Thyroid gland (tissue), 4 donors: ENCODE measurements at regions of chr19 and their contacts with region 1.

Region 1: DNA sequence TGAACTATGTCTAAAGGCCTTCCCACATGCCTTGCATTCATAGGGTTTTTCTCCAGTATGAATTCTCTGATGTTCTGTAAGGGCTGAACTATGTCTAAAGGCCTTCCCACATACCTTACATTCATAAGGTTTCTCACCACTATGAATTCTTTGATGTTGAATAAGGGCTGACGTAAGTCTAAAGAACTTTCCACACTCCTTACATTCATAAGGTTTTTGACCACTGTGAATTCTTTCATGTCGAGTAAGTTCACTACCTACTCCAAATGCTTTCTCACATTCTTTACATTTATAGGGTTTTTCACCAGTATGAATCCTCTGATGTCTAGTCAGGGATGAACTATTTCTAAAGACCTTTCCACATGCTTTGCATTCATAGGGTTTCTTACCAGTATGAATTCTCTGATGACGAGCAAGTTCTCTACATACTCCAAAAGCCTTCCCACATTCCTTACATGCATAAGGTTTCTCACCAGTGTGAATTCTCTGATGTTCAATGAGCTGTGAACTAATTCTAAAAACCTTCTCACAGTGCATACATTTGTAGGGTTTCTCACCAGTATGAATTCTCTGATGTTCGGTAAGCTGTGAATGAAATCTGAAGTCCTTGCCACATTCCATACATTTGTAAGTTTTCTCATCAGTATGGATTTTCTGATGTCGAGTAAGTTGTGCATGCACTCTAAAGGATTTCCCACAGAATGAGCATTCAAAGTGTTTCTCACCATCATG is 19.1 kb upstream of the ZNF260 start:
- DNase-seq: no peak
- H3K4me3 ChIP-seq: no peak overlapping the region
- H3K27ac ChIP-seq: no peak overlapping the region
- H3K4me1 ChIP-seq: no peaks in the 10 kb centered on the region
- H3K27me3 ChIP-seq: no peaks in the 10 kb centered on the region
- CTCF ChIP-seq: no peak
- POLR2A ChIP-seq: no peak

Region 2: GRCh38 chr19:36627057-36627456 is 79.9 kb after region 1 on chr19:
- intact Hi-C with region 1: loop called (anchors 5 kb)
- DNase-seq: no peak
- H3K4me3 ChIP-seq: no peak overlapping the region
- H3K27ac ChIP-seq: no peak overlapping the region
- H3K4me1 ChIP-seq: no peaks in the 10 kb centered on the region
- H3K27me3 ChIP-seq: no peaks in the 10 kb centered on the region
- CTCF ChIP-seq: no peak
- POLR2A ChIP-seq: no peak

Region 3: DNA sequence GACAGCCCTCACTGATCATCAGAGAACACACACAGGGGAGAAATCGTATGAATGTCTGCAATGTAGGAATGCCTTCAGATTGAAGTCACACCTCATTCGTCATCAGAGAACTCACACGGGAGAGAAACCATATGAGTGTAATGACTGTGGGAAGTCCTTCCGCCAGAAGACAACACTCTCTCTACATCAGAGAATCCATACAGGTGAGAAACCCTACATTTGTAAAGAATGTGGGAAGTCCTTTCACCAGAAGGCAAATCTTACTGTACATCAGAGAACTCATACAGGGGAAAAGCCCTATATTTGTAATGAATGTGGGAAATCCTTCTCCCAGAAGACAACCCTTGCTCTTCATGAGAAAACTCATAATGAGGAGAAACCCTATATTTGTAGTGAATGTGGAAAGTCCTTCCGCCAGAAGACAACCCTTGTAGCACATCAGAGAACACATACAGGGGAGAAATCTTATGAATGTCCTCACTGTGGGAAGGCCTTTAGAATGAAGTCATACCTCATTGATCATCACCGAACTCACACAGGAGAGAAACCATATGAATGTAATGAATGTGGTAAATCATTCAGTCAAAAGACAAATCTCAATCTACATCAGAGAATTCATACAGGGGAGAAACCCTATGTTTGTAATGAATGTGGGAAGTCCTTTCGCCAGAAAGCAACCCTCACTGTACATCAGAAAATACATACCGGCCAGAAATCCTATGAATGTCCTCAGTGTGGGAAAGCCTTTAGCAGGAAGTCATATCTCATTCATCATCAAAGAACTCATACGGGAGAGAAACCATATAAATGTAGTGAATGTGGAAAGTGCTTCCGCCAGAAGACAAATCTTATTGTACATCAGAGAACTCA is 172.8 kb after region 1 on chr19:
- intact Hi-C with region 1: loop called (anchors 10 kb)
- DNase-seq: no peak
- H3K4me3 ChIP-seq: no peak overlapping the region
- H3K27ac ChIP-seq: no peak overlapping the region
- H3K4me1 ChIP-seq: no peaks in the 10 kb centered on the region
- H3K27me3 ChIP-seq: no peaks in the 10 kb centered on the region
- CTCF ChIP-seq: no peak
- POLR2A ChIP-seq: no peak

Region 4: GRCh38 chr19:36819130-36819630 is 272.0 kb after region 1 on chr19:
- intact Hi-C with region 1: loop called (anchors 5 kb)
- DNase-seq: no peak
- H3K4me3 ChIP-seq: no peak overlapping the region
- H3K27ac ChIP-seq: no peak overlapping the region
- H3K4me1 ChIP-seq: no peaks in the 10 kb centered on the region
- H3K27me3 ChIP-seq: no peaks in the 10 kb centered on the region
- CTCF ChIP-seq: no peak
- POLR2A ChIP-seq: no peak

Region 5: GRCh38 chr19:36876993-36877938 is 330.1 kb after region 1 on chr19:
- intact Hi-C with region 1: loop called (anchors 5 kb)
- DNase-seq: no peak
- H3K4me3 ChIP-seq: no peak overlapping the region
- H3K27ac ChIP-seq: no peak overlapping the region
- H3K4me1 ChIP-seq: no peaks in the 10 kb centered on the region
- H3K27me3 ChIP-seq: no peaks in the 10 kb centered on the region
- CTCF ChIP-seq: no peak
- POLR2A ChIP-seq: no peak

Region 6: DNA sequence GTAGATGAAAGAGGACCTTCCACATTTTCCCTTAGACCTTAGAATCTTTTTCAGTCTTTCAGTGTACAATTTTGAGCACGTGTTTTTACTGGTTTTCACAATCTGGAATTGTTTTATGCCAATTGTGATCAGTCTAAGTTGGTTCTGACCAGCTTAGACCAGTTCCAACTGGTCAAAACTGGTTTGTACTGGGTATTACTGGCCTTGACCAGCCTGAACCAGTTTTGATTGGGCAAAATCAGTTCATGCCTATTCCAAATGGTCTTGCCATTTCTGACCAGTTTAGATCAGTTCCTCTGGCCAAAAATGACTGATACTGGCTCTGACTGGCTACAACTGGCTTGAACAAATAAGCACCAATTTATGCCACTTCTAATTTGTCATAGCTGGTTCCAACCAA is 588.9 kb after region 1 on chr19:
- intact Hi-C with region 1: loop called (anchors 10 kb)
- DNase-seq: no peak
- H3K4me3 ChIP-seq: no peak overlapping the region
- H3K27ac ChIP-seq: no peak overlapping the region
- H3K4me1 ChIP-seq: no peaks in the 10 kb centered on the region
- H3K27me3 ChIP-seq: no peaks in the 10 kb centered on the region
- CTCF ChIP-seq: no peak
- POLR2A ChIP-seq: no peak

Region 7: DNA sequence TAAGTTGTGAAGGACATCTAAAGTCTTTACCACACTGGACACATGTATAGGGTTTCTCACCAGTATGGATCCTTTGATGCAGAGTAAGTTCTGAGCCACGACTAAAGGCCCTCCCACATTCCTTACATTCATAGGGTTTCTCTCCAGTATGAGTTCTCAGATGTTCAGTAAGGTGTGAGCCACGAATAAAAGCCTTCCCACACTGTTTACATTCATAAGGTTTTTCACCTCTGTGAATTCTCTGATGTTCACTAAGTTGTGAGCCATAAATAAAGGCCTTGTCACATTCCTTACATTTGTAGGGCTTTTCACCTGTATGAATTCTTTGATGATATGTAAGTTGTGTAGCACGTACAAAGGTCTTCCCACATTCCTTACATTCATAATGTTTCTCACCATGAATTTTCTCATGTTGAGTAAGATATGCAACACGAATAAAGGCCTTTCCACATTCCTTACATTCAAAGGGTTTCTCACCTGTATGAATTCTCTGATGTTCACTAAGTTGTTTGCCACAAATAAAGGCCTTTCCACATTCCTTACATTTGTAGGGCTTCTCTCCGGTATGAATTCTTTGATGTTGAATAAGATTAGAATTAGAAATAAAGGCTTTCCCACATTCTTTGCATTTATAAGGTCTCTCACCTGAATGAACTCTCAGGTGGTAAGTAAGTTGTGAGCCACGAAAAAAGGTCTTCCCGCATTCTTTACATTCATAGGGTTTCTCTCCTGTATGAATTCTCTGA is 1017.6 kb after region 1 on chr19:
- intact Hi-C with region 1: loop called (anchors 10 kb)
- DNase-seq: no peak
- H3K4me3 ChIP-seq: no peak overlapping the region
- H3K27ac ChIP-seq: no peak overlapping the region
- H3K4me1 ChIP-seq: no peaks in the 10 kb centered on the region
- H3K27me3 ChIP-seq: no peaks in the 10 kb centered on the region
- CTCF ChIP-seq: no peak
- POLR2A ChIP-seq: no peak